Endothelial cell of umbilical vein (primary cell): ENCODE measurements at regions of chr4 and their contacts with region 1.

Region 1: DNA sequence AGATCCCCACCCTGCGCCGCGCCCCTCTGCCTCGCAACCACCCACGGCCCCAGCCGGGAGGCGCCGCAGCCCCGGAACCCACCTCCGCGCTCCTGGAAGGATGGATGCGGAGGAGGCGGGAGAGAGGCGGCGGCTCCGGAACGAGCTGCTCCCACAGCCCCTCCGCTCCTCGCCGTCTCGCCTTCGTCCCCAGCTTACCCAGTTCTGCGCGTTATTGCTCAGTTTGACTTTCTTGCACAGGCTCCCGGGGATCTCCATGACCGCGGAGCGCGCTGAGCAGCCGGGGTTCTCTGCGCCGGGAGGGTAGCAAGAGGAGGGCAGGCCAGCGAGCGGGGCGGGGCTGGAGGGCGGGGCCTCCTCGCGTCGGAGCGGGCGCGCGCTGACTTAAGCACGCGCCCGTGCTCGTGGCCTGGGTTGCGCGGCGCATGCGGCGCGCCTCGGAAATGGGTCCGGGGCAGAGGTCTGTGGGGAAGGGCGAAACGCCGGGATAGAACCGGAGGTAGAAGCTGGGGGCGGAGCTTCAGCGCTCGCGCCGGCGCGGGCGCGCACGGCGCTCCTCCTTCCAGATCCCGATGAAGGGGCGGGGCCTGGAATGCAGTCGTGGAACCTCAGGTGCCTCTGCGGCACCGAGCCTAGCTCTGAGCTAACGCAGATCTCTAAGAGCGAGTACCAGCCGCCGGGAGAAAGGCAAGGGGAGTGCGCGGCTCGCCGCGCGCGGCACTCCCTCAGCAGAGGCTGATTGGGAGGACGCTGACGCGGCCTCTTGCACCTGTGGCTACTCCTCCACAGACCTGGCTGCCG is at the start of gene PAPSS1:
- DNase-seq: peak; percentile 99
- H3K4me3 ChIP-seq: peak within 1 kb of the TSS; percentile 56 to 92 (median 84)
- H3K27ac ChIP-seq: peak within 1 kb of the TSS; percentile 42
- H3K4me1 ChIP-seq: peaks cover 10% of the 10 kb centered on the region
- H3K27me3 ChIP-seq: no peaks in the 10 kb centered on the region
- CTCF ChIP-seq: no peak
- POLR2A ChIP-seq: peak; percentile 84
- total RNA-seq, gene PAPSS1: 69.6 and 72.0 TPM in 2 replicates

Region 2: GRCh38 chr4:106287353-106287969 is 1432.7 kb before region 1 on chr4:
- CTCF ChIA-PET with region 1: no interaction called
- POLR2A ChIA-PET with region 1: no interaction called
- dilution Hi-C with region 1: no loop called
- intact Hi-C with region 1: no loop called
- DNase-seq: peak; percentile 85
- H3K4me3 ChIP-seq: no peak overlapping the region
- H3K27ac ChIP-seq: peak overlapping the region; percentile 79
- H3K4me1 ChIP-seq: peaks cover 9% of the 10 kb centered on the region
- H3K27me3 ChIP-seq: no peaks in the 10 kb centered on the region
- CTCF ChIP-seq: no peak
- POLR2A ChIP-seq: no peak

Region 3: DNA sequence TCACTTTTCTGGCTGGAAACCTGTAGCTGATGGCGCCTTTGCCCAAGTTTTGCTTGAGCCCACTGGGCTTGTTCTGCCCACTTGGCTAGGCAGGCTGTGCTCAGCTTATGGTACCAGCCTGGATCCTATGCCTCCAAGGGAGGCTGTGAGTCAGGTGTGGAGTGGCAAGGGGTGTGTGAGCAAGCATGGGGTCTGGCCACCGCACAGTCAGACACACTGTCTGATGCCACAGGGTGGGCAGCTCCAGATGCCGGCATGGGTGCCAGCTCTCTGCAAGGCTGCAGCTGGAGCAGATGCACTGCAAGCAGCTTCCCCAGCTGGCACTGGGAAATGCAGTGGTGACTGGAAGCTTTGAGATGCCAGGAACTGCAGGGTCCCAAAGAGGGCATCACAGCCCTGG is 1335.2 kb before region 1 on chr4:
- CTCF ChIA-PET with region 1: no interaction called
- POLR2A ChIA-PET with region 1: no interaction called
- dilution Hi-C with region 1: no loop called
- intact Hi-C with region 1: no loop called
- DNase-seq: no peak
- H3K4me3 ChIP-seq: no peak overlapping the region
- H3K27ac ChIP-seq: no peak overlapping the region
- H3K4me1 ChIP-seq: no peaks in the 10 kb centered on the region
- H3K27me3 ChIP-seq: no peaks in the 10 kb centered on the region
- CTCF ChIP-seq: no peak
- POLR2A ChIP-seq: no peak

Region 4: GRCh38 chr4:107561481-107561880 is 158.6 kb before region 1 on chr4:
- CTCF ChIA-PET with region 1: no interaction called
- POLR2A ChIA-PET with region 1: no interaction called
- dilution Hi-C with region 1: no loop called
- intact Hi-C with region 1: loop called (anchors 2 kb)
- DNase-seq: peak; percentile 83
- H3K4me3 ChIP-seq: no peak overlapping the region
- H3K27ac ChIP-seq: peak overlapping the region; percentile 88
- H3K4me1 ChIP-seq: peaks cover 11% of the 10 kb centered on the region
- H3K27me3 ChIP-seq: no peaks in the 10 kb centered on the region
- CTCF ChIP-seq: no peak
- POLR2A ChIP-seq: no peak

Region 5: GRCh38 chr4:107699466-107700206 is 20.5 kb before region 1 on chr4:
- CTCF ChIA-PET with region 1: interaction called, 4 read pairs
- POLR2A ChIA-PET with region 1: no interaction called
- dilution Hi-C with region 1: no loop called
- intact Hi-C with region 1: loop called (anchors 1 kb)
- DNase-seq: peak; percentile 76
- H3K4me3 ChIP-seq: no peak overlapping the region
- H3K27ac ChIP-seq: peak overlapping the region; percentile 60
- H3K4me1 ChIP-seq: peaks cover 28% of the 10 kb centered on the region
- H3K27me3 ChIP-seq: no peaks in the 10 kb centered on the region
- CTCF ChIP-seq: no peak
- POLR2A ChIP-seq: no peak

Region 6: DNA sequence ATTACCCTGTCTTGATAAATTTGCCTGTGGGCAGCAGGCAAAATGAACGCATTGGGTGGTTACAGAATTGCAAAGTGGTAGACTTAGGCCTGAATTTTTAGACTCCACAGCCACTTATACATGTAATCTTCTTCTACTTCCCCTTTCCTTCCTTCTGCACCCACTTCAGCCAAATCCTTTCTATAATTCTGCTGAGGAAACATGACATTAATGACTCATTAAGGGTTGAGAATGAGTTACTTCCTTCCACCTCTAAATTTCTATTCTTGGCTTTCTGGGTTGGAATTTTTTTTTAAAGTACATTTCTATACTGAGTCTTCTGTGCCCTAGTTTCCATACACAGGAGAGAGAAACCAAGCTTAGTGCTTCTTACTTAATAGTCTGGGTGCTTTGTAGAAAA is 10.2 kb before region 1 on chr4:
- CTCF ChIA-PET with region 1: interaction called, 12 read pairs
- POLR2A ChIA-PET with region 1: interaction called, 3 read pairs
- dilution Hi-C with region 1: no loop called
- intact Hi-C with region 1: loop called (anchors 1 kb)
- DNase-seq: peak; percentile 64
- H3K4me3 ChIP-seq: peak overlapping the region in 1 of 3 experiments; percentile 14
- H3K27ac ChIP-seq: peak overlapping the region; percentile 65
- H3K4me1 ChIP-seq: peaks cover 20% of the 10 kb centered on the region
- H3K27me3 ChIP-seq: no peaks in the 10 kb centered on the region
- CTCF ChIP-seq: no peak
- POLR2A ChIP-seq: no peak